ENCODE measurements at regions of chr12 and their contacts with region 1.

Region 1: GRCh38 chr12:12442548-12443071 is 85.7 kb downstream of the BORCS5 start:
- DNase-seq: no peak
- H3K4me3 Mint-ChIP-seq: peak overlapping the region; percentile 25
- H3K27ac Mint-ChIP-seq: peak overlapping the region; percentile 91
- H3K4me1 Mint-ChIP-seq: peaks cover 58% of the 10 kb centered on the region
- H3K27me3 Mint-ChIP-seq: no peaks in the 10 kb centered on the region

Region 2: DNA sequence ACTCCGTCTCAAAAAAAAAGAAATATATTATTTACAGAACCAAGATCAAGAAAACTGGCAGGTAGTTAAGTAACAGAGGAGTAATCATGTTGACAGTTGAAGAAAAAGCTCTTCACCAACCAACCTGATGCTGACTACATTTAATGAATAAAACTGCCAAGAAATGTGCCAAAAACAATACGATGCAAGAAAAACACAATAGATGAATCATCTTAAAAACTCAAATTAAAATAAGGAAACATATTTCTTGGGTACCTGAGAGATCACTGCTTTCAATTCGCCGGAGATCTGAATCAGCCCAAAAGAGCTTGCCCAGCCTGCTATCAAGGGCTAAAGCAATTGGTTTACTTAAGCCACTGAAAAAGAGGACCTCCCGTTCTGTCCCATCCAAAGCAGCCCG is 295.5 kb before region 1 on chr12:
- CTCF ChIA-PET with region 1: no interaction called
- intact Hi-C with region 1: no loop called
- DNase-seq: no peak
- H3K4me3 Mint-ChIP-seq: no peak overlapping the region
- H3K27ac Mint-ChIP-seq: no peak overlapping the region
- H3K4me1 Mint-ChIP-seq: no peaks in the 10 kb centered on the region
- H3K27me3 Mint-ChIP-seq: no peaks in the 10 kb centered on the region

Region 3: GRCh38 chr12:12356886-12357718 is 85.5 kb before region 1 on chr12 and contains the start of gene BORCS5:
- CTCF ChIA-PET with region 1: no interaction called
- intact Hi-C with region 1: loop called (anchors 1 kb)
- DNase-seq: peak; percentile 98
- H3K4me3 Mint-ChIP-seq: peak within 1 kb of the TSS; percentile 81
- H3K27ac Mint-ChIP-seq: peak within 1 kb of the TSS; percentile 90
- H3K4me1 Mint-ChIP-seq: peaks cover 41% of the 10 kb centered on the region
- H3K27me3 Mint-ChIP-seq: no peaks in the 10 kb centered on the region
- total RNA-seq, gene BORCS5: 31.2 to 35.6 TPM

Region 4: GRCh38 chr12:12432364-12432763 is 10.2 kb before region 1 on chr12:
- CTCF ChIA-PET with region 1: interaction called, 3 read pairs
- intact Hi-C with region 1: loop called (anchors 1 kb)
- DNase-seq: no peak
- H3K4me3 Mint-ChIP-seq: no peak overlapping the region
- H3K27ac Mint-ChIP-seq: no peak overlapping the region
- H3K4me1 Mint-ChIP-seq: peaks cover 38% of the 10 kb centered on the region
- H3K27me3 Mint-ChIP-seq: no peaks in the 10 kb centered on the region

Region 5: GRCh38 chr12:12456637-12457036 is 14.0 kb after region 1 on chr12:
- CTCF ChIA-PET with region 1: interaction called, 9 read pairs
- intact Hi-C with region 1: loop called (anchors 1 kb)
- DNase-seq: no peak
- H3K4me3 Mint-ChIP-seq: peak overlapping the region; percentile 17
- H3K27ac Mint-ChIP-seq: peak overlapping the region; percentile 76
- H3K4me1 Mint-ChIP-seq: peaks cover 51% of the 10 kb centered on the region
- H3K27me3 Mint-ChIP-seq: no peaks in the 10 kb centered on the region

Region 6: DNA sequence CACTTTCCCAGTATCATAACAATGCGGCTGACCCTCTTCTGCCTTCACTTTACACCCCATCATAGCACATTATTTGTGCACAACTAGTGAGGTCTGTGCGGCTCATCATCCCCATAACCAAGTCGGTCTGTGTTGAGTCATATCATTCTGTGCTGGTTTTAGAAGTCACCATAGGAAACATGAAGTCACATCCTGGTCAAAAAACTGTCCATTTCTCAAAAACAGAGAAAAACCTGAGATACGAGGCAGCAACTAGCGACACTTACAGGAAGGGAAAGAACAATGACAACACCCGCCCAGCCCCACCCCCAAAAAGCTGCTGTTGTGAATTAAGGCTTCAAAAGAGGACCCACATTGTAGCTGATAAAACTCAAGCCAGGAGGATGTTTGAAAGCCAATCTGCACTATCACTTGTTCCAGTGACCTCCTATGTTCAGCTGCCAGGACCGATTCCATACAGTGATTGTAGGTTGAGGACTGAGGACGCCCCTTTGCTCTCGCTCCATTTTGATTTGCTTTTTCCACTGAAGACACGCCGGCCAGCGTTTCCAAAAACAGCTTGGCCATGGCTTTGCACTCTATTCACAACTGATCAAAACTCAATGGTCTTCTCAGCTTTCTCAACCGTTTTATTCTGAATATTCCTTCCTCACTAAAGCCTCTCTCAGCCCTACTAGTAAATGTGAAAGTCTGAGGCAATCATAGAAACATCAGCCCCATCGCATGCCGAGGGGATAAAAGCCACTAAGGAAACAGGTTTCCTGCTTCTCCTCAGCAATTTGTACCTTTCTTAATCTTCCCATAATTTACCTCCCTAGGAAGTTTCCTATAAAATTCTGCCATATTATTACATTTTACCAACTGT is 32.6 kb after region 1 on chr12:
- CTCF ChIA-PET with region 1: interaction called, 3 read pairs
- intact Hi-C with region 1: loop called (anchors 1 kb)
- DNase-seq: peak; percentile 71
- H3K4me3 Mint-ChIP-seq: peak overlapping the region; percentile 19
- H3K27ac Mint-ChIP-seq: peak overlapping the region; percentile 95
- H3K4me1 Mint-ChIP-seq: peaks cover 52% of the 10 kb centered on the region
- H3K27me3 Mint-ChIP-seq: no peaks in the 10 kb centered on the region

Region 7: DNA sequence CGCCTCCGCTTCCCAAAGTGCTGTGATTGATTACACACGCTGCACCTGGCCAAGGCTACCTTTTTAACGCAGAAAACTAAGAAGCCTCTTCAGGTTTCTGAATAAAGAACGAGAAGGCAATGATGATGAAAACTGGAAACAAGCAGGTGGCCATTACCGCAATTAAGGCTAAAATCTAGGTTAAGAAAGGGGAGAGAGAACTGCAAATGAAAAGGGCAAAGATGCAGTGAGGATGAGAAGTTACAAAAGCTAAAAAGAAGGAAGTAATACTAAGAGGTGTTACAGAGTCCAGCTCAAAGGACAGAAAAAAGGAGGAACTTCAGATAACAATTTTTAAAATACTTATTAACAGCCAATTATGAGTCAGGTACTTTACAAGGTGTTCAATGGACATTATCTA is 40.3 kb after region 1 on chr12:
- CTCF ChIA-PET with region 1: interaction called, 3 read pairs
- intact Hi-C with region 1: loop called (anchors 1 kb)
- DNase-seq: no peak
- H3K4me3 Mint-ChIP-seq: peak overlapping the region; percentile 66
- H3K27ac Mint-ChIP-seq: peak overlapping the region; percentile 92
- H3K4me1 Mint-ChIP-seq: peaks cover 65% of the 10 kb centered on the region
- H3K27me3 Mint-ChIP-seq: no peaks in the 10 kb centered on the region

Region 8: GRCh38 chr12:12505544-12506495 is 63.2 kb after region 1 on chr12:
- CTCF ChIA-PET with region 1: no interaction called
- intact Hi-C with region 1: loop called (anchors 2 kb)
- DNase-seq: peak; percentile 61
- H3K4me3 Mint-ChIP-seq: peak overlapping the region; percentile 25
- H3K27ac Mint-ChIP-seq: peak overlapping the region; percentile 93
- H3K4me1 Mint-ChIP-seq: peaks cover 80% of the 10 kb centered on the region
- H3K27me3 Mint-ChIP-seq: no peaks in the 10 kb centered on the region

Region 9: GRCh38 chr12:12654691-12655460 is 212.3 kb after region 1 on chr12:
- CTCF ChIA-PET with region 1: no interaction called
- intact Hi-C with region 1: no loop called
- DNase-seq: no peak
- H3K4me3 Mint-ChIP-seq: no peak overlapping the region
- H3K27ac Mint-ChIP-seq: no peak overlapping the region
- H3K4me1 Mint-ChIP-seq: peaks cover 7% of the 10 kb centered on the region
- H3K27me3 Mint-ChIP-seq: no peaks in the 10 kb centered on the region